ENCODE measurements at regions of chr4 and their contacts with region 1.

Region 1: DNA sequence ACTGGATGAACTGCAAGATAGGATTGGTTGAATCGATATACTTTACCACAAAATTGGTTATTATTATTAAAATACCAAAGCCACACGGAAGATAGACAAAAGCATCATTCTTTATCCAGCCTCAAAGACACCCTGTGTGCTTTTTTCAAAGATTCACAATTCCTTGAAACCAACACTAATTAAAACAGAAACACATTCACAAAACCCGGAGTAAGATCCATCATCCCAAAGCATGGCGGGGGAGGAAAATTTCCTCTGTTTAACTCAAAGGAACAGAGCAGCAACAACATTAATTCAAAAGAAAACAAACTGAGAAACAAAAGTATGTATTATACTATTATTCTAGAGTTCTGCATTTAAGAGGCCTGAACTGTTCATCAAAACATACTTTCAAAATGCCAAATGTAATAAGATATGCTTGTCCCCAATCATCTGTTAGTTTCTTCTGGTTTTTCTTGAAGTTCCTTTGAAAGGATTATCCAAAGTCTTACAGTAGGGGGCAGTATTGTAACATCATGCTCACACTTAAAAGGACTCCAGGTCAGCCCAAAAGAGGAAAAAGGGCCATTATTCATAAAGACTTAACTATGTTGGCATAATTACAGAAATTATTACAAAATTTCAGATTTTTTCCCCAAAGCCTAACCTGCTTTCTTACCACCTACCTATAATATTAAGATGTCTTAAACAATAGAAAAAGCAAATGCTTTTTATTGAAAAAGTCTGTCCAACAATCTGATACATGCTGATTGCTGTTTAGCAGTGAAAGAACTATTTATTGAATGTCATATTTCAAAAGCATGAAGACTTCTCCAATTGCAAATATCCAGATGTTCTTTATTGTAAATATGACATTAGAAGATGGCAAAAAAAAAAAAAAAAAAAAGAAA is 168.7 kb downstream of the SCFD2 start:
- DNase-seq: peak; percentile 84
- H3K4me3 ChIP-seq: no peak overlapping the region
- H3K27ac ChIP-seq: no peak overlapping the region
- H3K4me1 ChIP-seq: no peaks in the 10 kb centered on the region
- H3K27me3 ChIP-seq: no peaks in the 10 kb centered on the region
- CTCF ChIP-seq: peak; percentile 46 to 49
- POLR2A ChIP-seq: no peak

Region 2: DNA sequence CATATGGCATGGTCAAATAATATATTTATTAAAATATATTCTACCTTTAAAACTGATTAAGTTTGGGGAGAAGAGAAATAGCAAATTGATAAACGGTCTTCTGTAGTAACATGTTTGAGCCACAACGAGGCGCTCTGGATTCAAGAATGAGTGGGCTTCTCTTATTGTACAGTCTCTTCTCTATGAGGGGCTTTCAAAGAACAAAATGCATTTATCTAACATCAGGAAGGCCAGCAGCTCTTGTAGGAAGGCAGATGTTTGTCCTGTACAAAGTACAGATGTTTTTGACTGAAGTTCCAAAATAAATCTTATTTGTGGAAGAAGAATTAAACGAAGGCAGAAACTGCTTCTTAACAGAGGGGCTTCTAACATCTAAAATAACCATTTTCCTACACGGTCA is 181.4 kb before region 1 on chr4:
- CTCF ChIA-PET with region 1: interaction called, 20 read pairs
- POLR2A ChIA-PET with region 1: no interaction called
- dilution Hi-C with region 1: no loop called
- intact Hi-C with region 1: loop called (anchors 1 kb)
- DNase-seq: peak; percentile 81
- H3K4me3 ChIP-seq: no peak overlapping the region
- H3K27ac ChIP-seq: no peak overlapping the region
- H3K4me1 ChIP-seq: peaks cover 18% of the 10 kb centered on the region
- H3K27me3 ChIP-seq: no peaks in the 10 kb centered on the region
- CTCF ChIP-seq: peak; percentile 53 to 63
- POLR2A ChIP-seq: no peak

Region 3: GRCh38 chr4:53377319-53378170 is 180.4 kb after region 1 on chr4 and contains the start of gene FIP1L1:
- CTCF ChIA-PET with region 1: interaction called, 3 read pairs
- POLR2A ChIA-PET with region 1: no interaction called
- dilution Hi-C with region 1: no loop called
- intact Hi-C with region 1: loop called (anchors 2 kb)
- DNase-seq: peak; percentile 95
- H3K4me3 ChIP-seq: peak within 1 kb of the TSS; percentile 82 to 90 (median 88)
- H3K27ac ChIP-seq: peak within 1 kb of the TSS; percentile 67
- H3K4me1 ChIP-seq: peaks cover 13% of the 10 kb centered on the region
- H3K27me3 ChIP-seq: peaks cover 0 to 8% of the 10 kb centered on the region in 2 experiments
- CTCF ChIP-seq: no peak
- POLR2A ChIP-seq: peak; percentile 95
- total RNA-seq, gene FIP1L1: 51.9 and 52.1 TPM in 2 replicates

Region 4: GRCh38 chr4:53490965-53491622 is 294.0 kb after region 1 on chr4:
- CTCF ChIA-PET with region 1: interaction called, 6 read pairs
- POLR2A ChIA-PET with region 1: no interaction called
- dilution Hi-C with region 1: no loop called
- intact Hi-C with region 1: loop called (anchors 2 kb)
- DNase-seq: peak; percentile 85
- H3K4me3 ChIP-seq: no peak overlapping the region
- H3K27ac ChIP-seq: no peak overlapping the region
- H3K4me1 ChIP-seq: peaks cover 6% of the 10 kb centered on the region
- H3K27me3 ChIP-seq: no peaks in the 10 kb centered on the region
- CTCF ChIP-seq: peak; percentile 52 to 55
- POLR2A ChIP-seq: no peak

Region 5: GRCh38 chr4:53702334-53703266 is 505.5 kb after region 1 on chr4:
- CTCF ChIA-PET with region 1: interaction called, 6 read pairs
- POLR2A ChIA-PET with region 1: no interaction called
- dilution Hi-C with region 1: no loop called
- intact Hi-C with region 1: loop called (anchors 2 kb)
- DNase-seq: peak; percentile 71
- H3K4me3 ChIP-seq: peak overlapping the region in 2 of 3 experiments; percentile 2 to 13
- H3K27ac ChIP-seq: peak overlapping the region; percentile 10
- H3K4me1 ChIP-seq: peaks cover 19% of the 10 kb centered on the region
- H3K27me3 ChIP-seq: no peaks in the 10 kb centered on the region
- CTCF ChIP-seq: peak in 1 of 2 donors; percentile 8
- POLR2A ChIP-seq: no peak

Region 6: GRCh38 chr4:53908661-53909078 is 711.5 kb after region 1 on chr4:
- CTCF ChIA-PET with region 1: no interaction called
- POLR2A ChIA-PET with region 1: no interaction called
- dilution Hi-C with region 1: no loop called
- intact Hi-C with region 1: loop called (anchors 2 kb)
- DNase-seq: peak; percentile 87
- H3K4me3 ChIP-seq: no peak overlapping the region
- H3K27ac ChIP-seq: no peak overlapping the region
- H3K4me1 ChIP-seq: peaks cover 3% of the 10 kb centered on the region
- H3K27me3 ChIP-seq: peaks cover 26% of the 10 kb centered on the region in 2 experiments
- CTCF ChIP-seq: peak; percentile 77 to 85
- POLR2A ChIP-seq: no peak

Region 7: DNA sequence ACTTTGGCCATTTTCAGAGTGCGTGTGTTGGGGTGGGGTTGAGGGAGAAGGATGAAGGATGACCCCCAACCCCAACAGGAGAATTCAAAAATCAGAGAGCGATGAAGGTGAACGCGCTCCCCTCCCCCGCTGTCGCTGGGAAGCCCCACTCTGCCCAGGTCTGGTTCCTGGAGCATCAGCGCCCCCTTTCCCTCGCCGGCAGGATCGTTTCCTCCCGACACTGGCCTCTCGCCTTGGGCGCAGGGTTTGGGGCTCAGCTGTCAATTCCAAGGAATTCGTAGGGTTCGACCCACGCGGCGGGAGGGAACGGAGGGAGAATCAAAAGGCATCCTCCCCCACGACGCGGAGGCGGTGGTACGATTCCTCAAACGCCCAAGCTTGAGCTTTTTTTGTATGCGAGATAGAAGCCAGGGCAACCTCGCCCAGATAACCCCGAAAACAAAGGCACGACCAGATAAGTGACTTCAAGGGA is 1031.0 kb after region 1 on chr4:
- CTCF ChIA-PET with region 1: interaction called, 128 read pairs
- POLR2A ChIA-PET with region 1: no interaction called
- dilution Hi-C with region 1: no loop called
- intact Hi-C with region 1: loop called (anchors 1 kb)
- DNase-seq: no peak
- H3K4me3 ChIP-seq: peak overlapping the region; percentile 15 to 52 (median 19)
- H3K27ac ChIP-seq: no peak overlapping the region
- H3K4me1 ChIP-seq: peaks cover 41% of the 10 kb centered on the region
- H3K27me3 ChIP-seq: peaks cover 65 to 78% of the 10 kb centered on the region in 2 experiments
- CTCF ChIP-seq: peak; percentile 72 to 88
- POLR2A ChIP-seq: no peak